ENCODE measurements at regions of chr17 and their contacts with region 1.

Region 1: GRCh38 chr17:75412455-75413317 is 7.2 kb upstream of the GRB2 start:
- DNase-seq: no peak
- ATAC-seq: peak; percentile 93
- H3K4me3 ChIP-seq: no peak overlapping the region
- H3K27ac ChIP-seq: peak overlapping the region; percentile 20
- H3K4me1 ChIP-seq: peaks cover 15% of the 10 kb centered on the region
- H3K27me3 ChIP-seq: no peaks in the 10 kb centered on the region
- CTCF ChIP-seq: peak; percentile 73 to 89 (median 85)
- EP300 ChIP-seq: no peak
- POLR2A ChIP-seq: no peak
- RAD21 ChIP-seq: peak; percentile 94

Region 2: GRCh38 chr17:75114552-75115314 is 298.0 kb before region 1 on chr17:
- CTCF ChIA-PET with region 1: interaction called, 10 read pairs
- POLR2A ChIA-PET with region 1: interaction called, 3 read pairs
- RAD21 ChIA-PET with region 1: interaction called, 9 read pairs
- SMC1A ChIA-PET with region 1: interaction called, 5 read pairs
- in situ Hi-C with region 1: loop called (anchors 5 kb)
- intact Hi-C with region 1: loop called (anchors 5 kb)
- DNase-seq: no peak
- ATAC-seq: peak; percentile 56
- H3K4me3 ChIP-seq: peak overlapping the region; percentile 63
- H3K27ac ChIP-seq: peak overlapping the region; percentile 83
- H3K4me1 ChIP-seq: peaks cover 46% of the 10 kb centered on the region
- H3K27me3 ChIP-seq: no peaks in the 10 kb centered on the region
- CTCF ChIP-seq: no peak
- EP300 ChIP-seq: no peak
- POLR2A ChIP-seq: no peak
- RAD21 ChIP-seq: no peak

Region 3: GRCh38 chr17:75261336-75262111 is 151.2 kb before region 1 on chr17 and contains the starts of genes GGA3 and MRPS7:
- CTCF ChIA-PET with region 1: interaction called, 18 read pairs
- POLR2A ChIA-PET with region 1: no interaction called
- RAD21 ChIA-PET with region 1: interaction called, 6 read pairs
- SMC1A ChIA-PET with region 1: interaction called, 7 read pairs
- in situ Hi-C with region 1: no loop called
- intact Hi-C with region 1: no loop called
- DNase-seq: peak; percentile 75
- ATAC-seq: peak; percentile 96
- H3K4me3 ChIP-seq: peak within 1 kb of the TSS; percentile 86
- H3K27ac ChIP-seq: peak within 1 kb of the TSS; percentile 99
- H3K4me1 ChIP-seq: peaks cover 9% of the 10 kb centered on the region
- H3K27me3 ChIP-seq: no peaks in the 10 kb centered on the region
- CTCF ChIP-seq: no peak; a peak in 1 of 6 replicates
- EP300 ChIP-seq: 0 out of 4 replicates have a peak, but pooled peaks of 1 of the 2 experiments have one; percentile 12
- POLR2A ChIP-seq: peak; percentile 91
- RAD21 ChIP-seq: no peak
- polyA plus RNA-seq, gene GGA3: 7.0 to 8.1 TPM
- polyA plus RNA-seq, gene MRPS7: 161 to 209 TPM

Region 4: GRCh38 chr17:75313941-75314551 is 98.6 kb before region 1 on chr17:
- CTCF ChIA-PET with region 1: interaction called, 12 read pairs
- POLR2A ChIA-PET with region 1: interaction called, 4 read pairs
- RAD21 ChIA-PET with region 1: interaction called, 13 read pairs
- SMC1A ChIA-PET with region 1: interaction called, 5 read pairs
- in situ Hi-C with region 1: no loop called
- intact Hi-C with region 1: no loop called
- DNase-seq: no peak
- ATAC-seq: peak; percentile 79
- H3K4me3 ChIP-seq: no peak overlapping the region
- H3K27ac ChIP-seq: peak overlapping the region; percentile 87
- H3K4me1 ChIP-seq: peaks cover 67% of the 10 kb centered on the region
- H3K27me3 ChIP-seq: no peaks in the 10 kb centered on the region
- CTCF ChIP-seq: no peak
- EP300 ChIP-seq: 0 out of 4 replicates have a peak, but pooled peaks of 1 of the 2 experiments have one; percentile 36
- POLR2A ChIP-seq: no peak
- RAD21 ChIP-seq: no peak

Region 5: DNA sequence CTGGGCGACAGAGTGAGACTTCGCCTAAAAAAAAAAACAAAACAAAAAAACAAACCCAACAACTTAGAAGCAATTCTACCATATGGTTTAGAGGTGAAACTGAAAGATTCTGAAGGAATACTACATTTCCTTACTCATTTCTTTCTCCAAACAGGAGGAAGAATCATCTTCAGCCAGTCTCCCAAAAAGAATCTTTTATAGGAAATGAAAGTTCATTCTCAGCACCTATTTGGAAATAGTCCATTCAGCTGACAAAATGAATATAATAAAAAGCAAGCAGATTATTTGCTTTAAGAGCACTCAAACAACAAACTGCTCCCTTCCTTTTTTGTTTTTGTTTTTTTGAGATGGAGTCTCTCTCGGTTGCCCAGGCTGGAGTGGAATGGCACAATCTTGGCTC is 24.9 kb before region 1 on chr17:
- CTCF ChIA-PET with region 1: no interaction called
- POLR2A ChIA-PET with region 1: no interaction called
- RAD21 ChIA-PET with region 1: no interaction called
- SMC1A ChIA-PET with region 1: no interaction called
- in situ Hi-C with region 1: no loop called
- intact Hi-C with region 1: no loop called
- DNase-seq: no peak
- ATAC-seq: no peak
- H3K4me3 ChIP-seq: no peak overlapping the region
- H3K27ac ChIP-seq: no peak overlapping the region
- H3K4me1 ChIP-seq: no peaks in the 10 kb centered on the region
- H3K27me3 ChIP-seq: no peaks in the 10 kb centered on the region
- CTCF ChIP-seq: no peak
- EP300 ChIP-seq: no peak
- POLR2A ChIP-seq: no peak
- RAD21 ChIP-seq: no peak

Region 6: GRCh38 chr17:75476271-75476671 is 63.6 kb after region 1 on chr17:
- CTCF ChIA-PET with region 1: no interaction called
- POLR2A ChIA-PET with region 1: no interaction called
- RAD21 ChIA-PET with region 1: no interaction called
- SMC1A ChIA-PET with region 1: no interaction called
- in situ Hi-C with region 1: no loop called
- intact Hi-C with region 1: no loop called
- DNase-seq: no peak
- ATAC-seq: no peak
- H3K4me3 ChIP-seq: no peak overlapping the region
- H3K27ac ChIP-seq: no peak overlapping the region
- H3K4me1 ChIP-seq: no peaks in the 10 kb centered on the region
- H3K27me3 ChIP-seq: no peaks in the 10 kb centered on the region
- CTCF ChIP-seq: no peak
- EP300 ChIP-seq: no peak
- POLR2A ChIP-seq: no peak
- RAD21 ChIP-seq: no peak